ENCODE measurements at regions of chr16 and their contacts with region 1.

Region 1: DNA sequence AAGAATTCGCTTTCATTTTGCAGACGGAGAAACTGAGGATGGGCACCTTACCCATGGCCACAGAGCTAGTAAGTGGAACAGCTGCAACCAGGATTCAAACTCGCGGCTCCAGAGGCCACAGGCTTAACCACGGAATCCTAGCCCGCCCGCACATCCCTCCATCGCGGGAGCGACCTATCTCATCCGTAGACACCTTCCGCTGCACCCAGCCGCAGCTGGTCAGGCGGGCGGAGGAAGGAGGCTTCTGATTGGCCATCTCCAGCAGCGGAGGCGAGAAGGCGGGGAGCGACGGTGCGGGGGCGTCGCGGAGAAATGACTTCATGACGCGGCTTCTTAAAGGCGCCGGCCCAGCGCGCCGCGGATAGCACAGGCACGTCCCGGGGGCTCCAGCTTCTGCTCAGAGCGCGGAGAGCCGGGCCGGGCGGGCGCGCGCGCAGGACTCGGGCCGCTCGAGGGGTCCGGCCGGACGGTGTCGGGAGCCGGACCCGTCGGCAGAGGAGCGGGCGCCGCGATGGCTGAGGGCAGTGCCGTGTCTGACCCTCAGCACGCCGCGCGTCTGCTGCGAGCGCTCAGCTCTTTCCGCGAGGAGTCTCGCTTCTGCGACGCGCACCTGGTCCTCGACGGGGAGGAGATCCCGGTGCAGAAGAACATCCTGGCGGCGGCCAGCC is at the start of gene GAN:
- DNase-seq: peak; percentile 97
- H3K4me3 Mint-ChIP-seq: peak within 1 kb of the TSS; percentile 97
- H3K27ac Mint-ChIP-seq: peak within 1 kb of the TSS; percentile 83
- H3K4me1 Mint-ChIP-seq: peaks cover 65% of the 10 kb centered on the region
- H3K27me3 Mint-ChIP-seq: no peaks in the 10 kb centered on the region
- total RNA-seq, gene GAN: 10.6 to 11.3 TPM

Region 2: DNA sequence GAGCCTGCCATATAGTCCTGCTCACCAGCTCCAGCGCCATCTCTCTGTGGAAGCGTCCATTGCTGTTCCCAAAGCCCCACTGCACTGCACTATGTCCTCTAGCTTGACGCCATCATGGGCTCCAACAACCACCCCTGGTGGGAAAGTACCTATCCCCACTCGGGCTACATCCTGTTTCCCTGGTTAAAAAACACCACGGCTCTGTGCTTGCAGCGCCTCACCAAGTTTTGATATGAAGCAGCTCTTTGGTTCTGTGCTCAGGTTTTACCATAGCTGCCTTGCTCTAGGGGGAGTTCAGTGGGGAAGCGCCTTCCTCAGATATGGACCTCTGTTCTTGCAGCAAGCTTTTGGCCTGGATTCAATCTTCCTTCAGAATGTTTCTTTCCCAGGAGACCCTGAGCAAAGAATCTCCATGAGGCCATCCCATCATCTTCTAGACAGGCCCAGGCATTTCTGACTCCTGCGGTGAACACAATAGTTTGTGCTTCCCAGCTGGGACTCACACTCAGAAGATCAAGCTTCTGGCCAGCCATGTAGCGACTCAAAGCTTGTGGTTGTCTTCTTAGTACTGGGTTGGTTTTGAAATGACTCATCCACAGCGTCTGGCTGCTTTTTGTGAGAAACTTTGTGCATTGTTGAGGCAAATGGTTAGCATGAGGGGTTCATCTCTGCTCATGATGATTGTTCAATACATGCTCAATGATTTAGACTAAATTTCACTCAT is 734.5 kb before region 1 on chr16:
- CTCF ChIA-PET with region 1: no interaction called
- intact Hi-C with region 1: loop called (anchors 10 kb)
- DNase-seq: peak; percentile 90
- H3K4me3 Mint-ChIP-seq: peak overlapping the region; percentile 59
- H3K27ac Mint-ChIP-seq: peak overlapping the region; percentile 91
- H3K4me1 Mint-ChIP-seq: peaks cover 46% of the 10 kb centered on the region
- H3K27me3 Mint-ChIP-seq: no peaks in the 10 kb centered on the region

Region 3: GRCh38 chr16:81035398-81035974 is 279.3 kb before region 1 on chr16 and contains the start of gene ATMIN:
- CTCF ChIA-PET with region 1: no interaction called
- intact Hi-C with region 1: loop called (anchors 1 kb)
- DNase-seq: peak; percentile 85
- H3K4me3 Mint-ChIP-seq: peak within 1 kb of the TSS; percentile 81
- H3K27ac Mint-ChIP-seq: peak within 1 kb of the TSS; percentile 37
- H3K4me1 Mint-ChIP-seq: peaks cover 34% of the 10 kb centered on the region
- H3K27me3 Mint-ChIP-seq: no peaks in the 10 kb centered on the region
- total RNA-seq, gene ATMIN: 16.6 to 18.9 TPM

Region 4: GRCh38 chr16:81204798-81205680 is 109.7 kb before region 1 on chr16:
- CTCF ChIA-PET with region 1: interaction called, 8 read pairs
- intact Hi-C with region 1: loop called (anchors 1 kb)
- DNase-seq: peak; percentile 43
- H3K4me3 Mint-ChIP-seq: no peak overlapping the region
- H3K27ac Mint-ChIP-seq: no peak overlapping the region
- H3K4me1 Mint-ChIP-seq: no peaks in the 10 kb centered on the region
- H3K27me3 Mint-ChIP-seq: peaks cover 3% of the 10 kb centered on the region

Region 5: DNA sequence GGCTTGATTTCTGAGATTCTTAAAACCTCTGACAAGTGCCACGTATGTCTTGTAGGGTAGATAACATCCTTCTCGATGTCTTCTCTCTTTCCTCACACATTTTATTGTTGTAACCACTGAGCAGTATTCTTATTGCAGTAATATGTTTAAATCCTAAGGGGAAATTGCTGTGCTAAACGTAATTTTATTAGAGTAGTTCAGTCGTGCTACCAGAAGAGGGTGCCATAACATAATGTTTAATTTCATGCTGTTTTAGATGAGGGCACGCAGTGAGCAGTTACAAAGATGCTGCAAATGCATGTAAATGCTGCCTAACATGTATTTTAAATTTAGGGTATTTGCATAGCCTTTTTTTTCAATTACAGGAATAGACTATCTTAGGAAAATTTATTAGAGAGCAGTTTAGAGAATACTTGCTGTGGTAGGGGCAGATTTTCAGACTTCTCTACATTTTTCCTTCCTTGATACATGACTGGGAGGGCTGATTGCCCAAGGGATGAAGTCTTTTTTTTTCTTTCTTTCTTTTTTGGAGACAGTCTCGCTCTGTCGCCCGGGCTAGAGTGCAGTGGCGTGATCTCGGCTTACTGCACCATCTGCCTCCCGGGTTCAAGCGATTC is 51.7 kb after region 1 on chr16:
- CTCF ChIA-PET with region 1: no interaction called
- intact Hi-C with region 1: no loop called
- DNase-seq: peak; percentile 9
- H3K4me3 Mint-ChIP-seq: no peak overlapping the region
- H3K27ac Mint-ChIP-seq: no peak overlapping the region
- H3K4me1 Mint-ChIP-seq: no peaks in the 10 kb centered on the region
- H3K27me3 Mint-ChIP-seq: no peaks in the 10 kb centered on the region

Region 6: GRCh38 chr16:81444448-81445121 is 129.8 kb after region 1 on chr16 and contains the start of gene CMIP:
- CTCF ChIA-PET with region 1: no interaction called
- intact Hi-C with region 1: loop called (anchors 5 kb)
- DNase-seq: peak; percentile 81
- H3K4me3 Mint-ChIP-seq: peak within 1 kb of the TSS; percentile 75
- H3K27ac Mint-ChIP-seq: peak within 1 kb of the TSS; percentile 57
- H3K4me1 Mint-ChIP-seq: peaks cover 33% of the 10 kb centered on the region
- H3K27me3 Mint-ChIP-seq: no peaks in the 10 kb centered on the region
- total RNA-seq, gene CMIP: 28.6 to 28.8 TPM

Region 7: DNA sequence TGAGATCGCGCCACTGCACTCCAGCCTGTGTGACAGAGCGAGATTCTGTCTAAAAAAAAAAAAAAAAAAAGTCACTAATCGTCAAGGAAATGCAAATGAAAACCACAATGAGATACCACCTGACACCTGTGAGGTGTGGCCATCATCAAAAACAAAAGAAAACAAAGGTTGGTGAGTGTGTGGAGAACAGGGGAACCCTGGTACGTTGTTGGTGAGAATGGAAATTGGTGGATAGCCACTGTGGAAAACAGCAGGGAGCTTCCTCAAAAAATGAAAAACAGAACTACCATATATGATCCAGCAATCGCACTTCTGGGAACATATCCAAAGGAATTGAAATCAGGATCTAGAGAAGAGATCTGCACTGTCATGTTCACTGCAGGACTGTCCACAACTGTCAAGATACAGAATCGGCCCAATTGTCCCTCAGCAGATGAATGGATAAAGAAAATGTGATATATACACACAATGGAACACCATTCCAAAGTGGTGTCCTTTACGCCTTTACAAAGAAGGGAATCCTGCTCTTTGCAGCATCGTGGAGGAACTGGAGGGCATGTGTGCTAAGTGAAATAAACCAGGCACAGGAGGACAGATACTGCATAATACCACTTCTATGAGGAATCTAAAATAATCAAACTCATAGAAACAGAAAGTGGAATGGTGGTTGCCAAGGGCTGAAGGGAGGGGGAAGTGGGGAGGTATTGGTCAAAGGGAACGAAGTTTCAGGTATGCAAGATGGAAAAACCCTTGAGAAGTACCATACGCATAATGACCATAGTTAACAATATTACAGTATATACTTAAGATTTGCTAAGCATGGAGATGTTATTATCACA is 400.8 kb after region 1 on chr16:
- CTCF ChIA-PET with region 1: no interaction called
- intact Hi-C with region 1: loop called (anchors 5 kb)
- DNase-seq: peak; percentile 54
- H3K4me3 Mint-ChIP-seq: no peak overlapping the region
- H3K27ac Mint-ChIP-seq: peak overlapping the region; percentile 25
- H3K4me1 Mint-ChIP-seq: peaks cover 37% of the 10 kb centered on the region
- H3K27me3 Mint-ChIP-seq: no peaks in the 10 kb centered on the region